ENCODE measurements at regions of chr6 and their contacts with region 1.

Region 1: DNA sequence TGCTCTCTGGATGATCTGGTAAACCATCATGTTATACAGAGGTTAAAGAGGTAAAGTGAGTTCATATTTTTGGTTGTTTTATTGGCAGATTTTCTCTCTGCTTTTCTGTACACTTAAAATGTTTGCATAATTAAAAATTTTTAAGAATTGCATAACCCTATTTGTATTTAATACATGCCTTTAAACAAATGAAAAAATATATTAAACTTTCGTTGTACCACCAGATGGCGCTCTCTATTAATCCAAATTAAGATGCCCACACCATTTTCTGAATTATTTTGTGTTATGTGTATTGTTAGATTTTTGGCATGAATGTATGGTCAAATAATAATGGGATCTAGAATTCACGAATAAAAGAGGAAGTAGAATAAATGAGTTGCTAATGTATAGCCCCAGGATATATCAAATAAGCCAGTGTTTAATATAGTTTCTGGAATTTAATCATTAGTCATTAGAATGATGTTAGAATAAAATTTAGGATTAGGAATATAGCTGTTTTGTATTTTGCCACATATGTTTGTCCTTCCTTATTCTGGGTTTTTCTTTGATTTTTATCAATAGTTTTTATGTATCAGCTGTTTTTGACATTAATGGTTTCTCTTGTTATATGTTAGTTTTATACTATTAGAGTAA is 38.9 kb downstream of the SMAP1 start:
- DNase-seq: no peak
- ATAC-seq: no peak
- H3K4me3 ChIP-seq: no peak overlapping the region
- H3K27ac ChIP-seq: no peak overlapping the region
- H3K4me1 ChIP-seq: no peaks in the 10 kb centered on the region
- H3K27me3 ChIP-seq: no peaks in the 10 kb centered on the region

Region 2: GRCh38 chr6:70955441-70956190 is 249.0 kb after region 1 on chr6:
- intact Hi-C with region 1: loop called in 1 of 2 experiments (anchors 5 kb)
- DNase-seq: peak; percentile 83 to 95
- ATAC-seq: peak; percentile 88
- H3K4me3 ChIP-seq: peak overlapping the region; percentile 27 to 35
- H3K27ac ChIP-seq: no peak overlapping the region
- H3K4me1 ChIP-seq: peaks cover 0 to 3% of the 10 kb centered on the region in 2 donors
- H3K27me3 ChIP-seq: no peaks in the 10 kb centered on the region

Measured in aorta (tissue), 5 donors.